ENCODE measurements at regions of chr1 and their contacts with region 1.

Region 1: DNA sequence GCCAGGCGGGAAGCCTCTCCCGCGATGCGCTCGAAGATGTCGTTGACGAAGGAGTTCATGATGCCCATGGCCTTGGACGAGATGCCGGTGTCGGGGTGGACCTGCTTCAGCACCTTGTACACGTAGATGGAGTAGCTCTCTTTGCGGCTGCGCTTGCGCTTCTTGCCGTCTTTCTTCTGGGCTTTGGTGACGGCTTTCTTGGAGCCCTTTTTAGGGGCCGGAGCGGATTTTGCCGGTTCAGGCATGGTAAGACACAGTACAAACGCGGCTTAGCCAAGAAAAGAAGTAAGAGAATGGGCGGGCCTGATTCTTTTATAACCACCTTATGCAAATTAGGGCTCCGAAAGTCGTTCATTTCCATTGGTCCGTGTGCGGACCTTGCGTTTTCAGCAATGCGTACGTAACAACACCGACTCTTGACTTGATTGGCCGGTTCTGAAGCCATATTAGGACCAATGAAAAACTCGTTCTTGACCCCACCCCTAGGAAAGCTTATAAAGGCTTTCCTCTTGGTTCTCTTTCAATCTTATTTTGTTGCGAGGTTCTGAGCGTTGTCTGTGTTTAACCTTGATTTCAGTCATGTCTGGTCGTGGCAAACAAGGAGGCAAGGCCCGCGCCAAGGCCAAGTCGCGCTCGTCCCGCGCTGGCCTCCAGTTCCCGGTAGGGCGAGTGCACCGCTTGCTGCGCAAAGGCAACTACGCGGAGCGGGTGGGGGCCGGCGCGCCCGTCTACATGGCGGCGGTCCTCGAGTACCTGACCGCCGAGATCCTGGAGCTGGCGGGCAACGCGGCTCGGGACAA is 12.8 kb upstream of the BOLA1 start:
- DNase-seq: peak; percentile 83 to 98 (median 89)
- ATAC-seq: peak; percentile 80
- H3K4me3 ChIP-seq: peak overlapping the region; percentile 64
- H3K27ac ChIP-seq: peak overlapping the region; percentile 98
- H3K4me1 ChIP-seq: peaks cover 8 to 27% of the 10 kb centered on the region in 2 experiments
- H3K27me3 ChIP-seq: no peaks in the 10 kb centered on the region
- CTCF ChIP-seq: no peak
- EP300 ChIP-seq: peak; percentile 27; the same call in 1 of the 2 replicates
- POLR2A ChIP-seq: peak; percentile 100
- RAD21 ChIP-seq: peak in 1 of 2 experiments; percentile 25; a peak in 1 of 4 replicates

Region 2: DNA sequence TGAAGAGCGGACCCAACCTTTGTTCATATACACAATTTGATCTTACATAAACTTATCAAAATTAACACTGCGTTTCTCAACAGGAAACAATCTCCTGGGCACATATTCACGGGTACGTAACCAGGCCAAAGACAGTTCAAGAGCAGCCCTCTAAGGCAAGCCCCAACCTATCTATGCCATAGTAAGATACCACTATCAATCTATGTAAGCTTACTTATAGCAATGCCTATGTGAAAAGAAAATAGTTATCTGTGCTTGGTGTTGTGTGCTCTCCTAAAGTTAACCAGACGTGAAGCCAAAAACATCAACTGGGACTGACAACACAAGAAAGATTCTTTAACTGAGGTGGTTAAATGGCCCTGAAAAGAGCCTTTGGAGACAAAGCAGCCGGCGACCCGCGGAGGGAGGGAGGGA is 36.6 kb before region 1 on chr1:
- CTCF ChIA-PET with region 1: no interaction called
- POLR2A ChIA-PET with region 1: interaction called, 39 read pairs
- in situ Hi-C with region 1: no loop called
- intact Hi-C with region 1: no loop called
- DNase-seq: peak in 1 of 4 experiments; percentile 30
- ATAC-seq: no peak
- H3K4me3 ChIP-seq: peak overlapping the region; percentile 60
- H3K27ac ChIP-seq: peak overlapping the region; percentile 82
- H3K4me1 ChIP-seq: peaks cover 5 to 27% of the 10 kb centered on the region in 2 experiments; a peak in 4 of 5 replicates
- H3K27me3 ChIP-seq: no peaks in the 10 kb centered on the region
- CTCF ChIP-seq: no peak
- EP300 ChIP-seq: no peak
- POLR2A ChIP-seq: peak; percentile 38; the same call in 1 of the 2 replicates
- RAD21 ChIP-seq: no peak

Region 3: DNA sequence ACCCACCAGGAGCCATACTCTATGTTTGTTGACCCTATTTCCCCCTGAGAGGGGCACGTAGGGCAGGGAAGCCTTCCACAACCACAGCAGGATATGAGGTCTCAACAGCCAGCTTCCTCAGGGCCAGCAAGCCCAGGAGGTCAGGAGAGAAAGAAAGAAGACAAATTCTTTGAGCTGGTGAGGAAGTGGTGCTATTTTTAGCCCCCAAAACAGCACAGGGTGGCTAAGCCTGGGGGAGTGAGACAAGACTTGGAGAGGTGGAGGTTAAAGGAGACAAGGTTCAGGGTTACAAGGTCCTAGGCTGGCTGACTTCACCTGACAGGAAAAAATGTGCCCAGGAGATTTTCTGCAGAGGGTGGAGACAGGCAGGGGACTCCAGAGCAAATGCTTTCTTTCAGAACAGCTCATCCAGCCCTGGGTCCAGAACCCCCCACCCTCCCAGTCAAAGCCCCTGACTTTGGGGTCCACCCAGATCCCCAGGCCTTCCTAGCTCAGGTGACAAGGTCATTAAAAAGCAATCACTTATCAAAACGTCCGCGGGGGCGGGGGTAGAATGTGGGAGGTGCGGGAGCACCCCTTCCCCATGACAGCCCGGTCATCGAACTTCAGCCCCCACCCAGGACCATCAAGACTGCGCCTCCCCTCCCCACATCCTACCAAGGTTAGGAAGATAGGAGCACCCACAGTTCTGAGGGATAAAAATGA is 29.7 kb after region 1 on chr1:
- CTCF ChIA-PET with region 1: no interaction called
- POLR2A ChIA-PET with region 1: interaction called, 71 read pairs
- in situ Hi-C with region 1: no loop called
- intact Hi-C with region 1: no loop called
- DNase-seq: peak in 1 of 4 experiments; percentile 58
- ATAC-seq: peak; percentile 36
- H3K4me3 ChIP-seq: no peak overlapping the region
- H3K27ac ChIP-seq: peak overlapping the region; percentile 73
- H3K4me1 ChIP-seq: peaks cover 15 to 26% of the 10 kb centered on the region in 2 experiments
- H3K27me3 ChIP-seq: no peaks in the 10 kb centered on the region
- CTCF ChIP-seq: no peak
- EP300 ChIP-seq: no peak
- POLR2A ChIP-seq: no peak
- RAD21 ChIP-seq: no peak

Region 4: GRCh38 chr1:149942207-149942606 is 55.6 kb after region 1 on chr1:
- CTCF ChIA-PET with region 1: interaction called, 4 read pairs
- POLR2A ChIA-PET with region 1: interaction called, 29 read pairs
- in situ Hi-C with region 1: no loop called
- intact Hi-C with region 1: loop called (anchors 1 kb)
- DNase-seq: peak; percentile 66 to 74 (median 70)
- ATAC-seq: peak; percentile 81
- H3K4me3 ChIP-seq: no peak overlapping the region
- H3K27ac ChIP-seq: no peak overlapping the region; the same call in 2 of the 3 replicates
- H3K4me1 ChIP-seq: peaks cover 16 to 25% of the 10 kb centered on the region in 2 experiments
- H3K27me3 ChIP-seq: no peaks in the 10 kb centered on the region
- CTCF ChIP-seq: peak; percentile 46 to 70 (median 59)
- EP300 ChIP-seq: no peak
- POLR2A ChIP-seq: no peak
- RAD21 ChIP-seq: peak; percentile 51 to 67

Region 5: GRCh38 chr1:149972547-149972946 is 86.0 kb after region 1 on chr1:
- CTCF ChIA-PET with region 1: no interaction called
- POLR2A ChIA-PET with region 1: no interaction called
- in situ Hi-C with region 1: no loop called
- intact Hi-C with region 1: no loop called
- DNase-seq: no peak
- ATAC-seq: no peak
- H3K4me3 ChIP-seq: no peak overlapping the region
- H3K27ac ChIP-seq: no peak overlapping the region
- H3K4me1 ChIP-seq: no peaks in the 10 kb centered on the region
- H3K27me3 ChIP-seq: no peaks in the 10 kb centered on the region
- CTCF ChIP-seq: no peak
- EP300 ChIP-seq: no peak
- POLR2A ChIP-seq: no peak
- RAD21 ChIP-seq: no peak

Region 6: GRCh38 chr1:150067184-150068036 is 180.8 kb after region 1 on chr1 and contains the start of gene VPS45:
- CTCF ChIA-PET with region 1: no interaction called
- POLR2A ChIA-PET with region 1: interaction called, 19 read pairs
- in situ Hi-C with region 1: no loop called
- intact Hi-C with region 1: no loop called
- DNase-seq: peak; percentile 87 to 94 (median 90)
- ATAC-seq: peak; percentile 98
- H3K4me3 ChIP-seq: peak within 1 kb of the TSS; percentile 47
- H3K27ac ChIP-seq: peak within 1 kb of the TSS; percentile 75
- H3K4me1 ChIP-seq: peaks cover 9 to 14% of the 10 kb centered on the region in 2 experiments; a peak in 3 of 5 replicates
- H3K27me3 ChIP-seq: no peaks in the 10 kb centered on the region
- CTCF ChIP-seq: 0 out of 6 replicates have a peak, but pooled peaks of 1 of the 3 experiments have one; percentile 6
- EP300 ChIP-seq: peak; percentile 28; the same call in 1 of the 2 replicates
- POLR2A ChIP-seq: peak; percentile 83
- RAD21 ChIP-seq: no peak
- polyA plus RNA-seq, gene VPS45: 21.3 to 43.6 TPM

Measured in K562 (cell line).